ENCODE measurements at regions of chr20 and their contacts with region 1.

Region 1: GRCh38 chr20:19588732-19589131 is 169.3 kb upstream of the RIN2 start:
- DNase-seq: peak; percentile 59
- H3K4me3 ChIP-seq: no peak overlapping the region
- H3K27ac ChIP-seq: peak overlapping the region; percentile 87
- H3K4me1 ChIP-seq: peaks cover 37% of the 10 kb centered on the region
- H3K27me3 ChIP-seq: no peaks in the 10 kb centered on the region
- CTCF ChIP-seq: peak; percentile 26; the same call in 1 of the 2 replicates

Region 2: GRCh38 chr20:19212821-19213502 is 375.8 kb before region 1 on chr20:
- CTCF ChIA-PET with region 1: no interaction called
- POLR2A ChIA-PET with region 1: no interaction called
- intact Hi-C with region 1: loop called (anchors 2 kb)
- DNase-seq: peak; percentile 88
- H3K4me3 ChIP-seq: peak overlapping the region; percentile 88
- H3K27ac ChIP-seq: peak overlapping the region; percentile 97
- H3K4me1 ChIP-seq: peaks cover 60% of the 10 kb centered on the region
- H3K27me3 ChIP-seq: no peaks in the 10 kb centered on the region
- CTCF ChIP-seq: peak; percentile 49

Region 3: GRCh38 chr20:19320005-19320404 is 268.7 kb before region 1 on chr20:
- CTCF ChIA-PET with region 1: interaction called, 3 read pairs
- POLR2A ChIA-PET with region 1: interaction called, 4 read pairs
- intact Hi-C with region 1: loop called (anchors 1 kb)
- DNase-seq: peak; percentile 47
- H3K4me3 ChIP-seq: peak overlapping the region; percentile 40
- H3K27ac ChIP-seq: peak overlapping the region; percentile 92
- H3K4me1 ChIP-seq: peaks cover 92% of the 10 kb centered on the region
- H3K27me3 ChIP-seq: no peaks in the 10 kb centered on the region
- CTCF ChIP-seq: no peak

Region 4: GRCh38 chr20:19433371-19434350 is 155.1 kb before region 1 on chr20:
- CTCF ChIA-PET with region 1: no interaction called
- POLR2A ChIA-PET with region 1: no interaction called
- intact Hi-C with region 1: no loop called
- DNase-seq: no peak
- H3K4me3 ChIP-seq: no peak overlapping the region
- H3K27ac ChIP-seq: no peak overlapping the region
- H3K4me1 ChIP-seq: peaks cover 25% of the 10 kb centered on the region
- H3K27me3 ChIP-seq: no peaks in the 10 kb centered on the region
- CTCF ChIP-seq: no peak

Region 5: DNA sequence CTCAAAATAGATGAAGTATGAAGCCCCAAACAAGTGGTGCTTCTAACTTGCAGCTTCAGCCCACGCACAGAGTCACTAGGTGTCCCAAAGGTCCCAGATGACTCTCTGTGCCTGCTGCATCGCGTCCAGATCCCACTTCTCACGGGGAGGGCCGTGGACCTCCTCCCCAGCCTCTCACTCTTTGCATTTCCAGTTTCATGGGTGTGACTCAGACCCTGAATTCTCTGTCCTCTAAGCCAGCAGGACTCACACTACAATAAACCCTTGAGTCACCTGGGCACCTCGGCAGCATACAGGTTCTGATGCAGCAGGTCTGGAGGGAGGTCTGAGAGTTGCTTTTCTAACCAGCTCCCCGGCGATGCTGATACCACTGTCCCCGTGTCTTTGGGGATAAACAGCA is 55.4 kb after region 1 on chr20:
- CTCF ChIA-PET with region 1: no interaction called
- POLR2A ChIA-PET with region 1: no interaction called
- intact Hi-C with region 1: no loop called
- DNase-seq: no peak
- H3K4me3 ChIP-seq: no peak overlapping the region
- H3K27ac ChIP-seq: no peak overlapping the region
- H3K4me1 ChIP-seq: no peaks in the 10 kb centered on the region
- H3K27me3 ChIP-seq: no peaks in the 10 kb centered on the region
- CTCF ChIP-seq: no peak